Activated B cell treated with CpG ODN at 0.5 μM for 24 hours (primary cell): ENCODE measurements at regions of chr14 and their contacts with region 1.

Region 1: GRCh38 chr14:67571272-67571850 is 28.7 kb downstream of the PIGH start:
- DNase-seq: peak; percentile 55
- ATAC-seq: peak; percentile 86
- H3K4me3 Mint-ChIP-seq: no peak overlapping the region
- H3K27ac Mint-ChIP-seq: no peak overlapping the region
- H3K4me1 Mint-ChIP-seq: peaks cover 3% of the 10 kb centered on the region
- H3K27me3 Mint-ChIP-seq: peaks cover 8% of the 10 kb centered on the region
- CTCF ChIP-seq: no peak

Region 2: GRCh38 chr14:66359500-66359899 is 1211.9 kb before region 1 on chr14:
- CTCF ChIA-PET with region 1: no interaction called
- POLR2A ChIA-PET with region 1: no interaction called
- intact Hi-C with region 1: loop called (anchors 10 kb)
- DNase-seq: no peak
- ATAC-seq: no peak
- H3K4me3 Mint-ChIP-seq: no peak overlapping the region
- H3K27ac Mint-ChIP-seq: no peak overlapping the region
- H3K4me1 Mint-ChIP-seq: no peaks in the 10 kb centered on the region
- H3K27me3 Mint-ChIP-seq: no peaks in the 10 kb centered on the region
- CTCF ChIP-seq: peak; percentile 46

Region 3: GRCh38 chr14:67420102-67420830 is 151.1 kb before region 1 on chr14:
- CTCF ChIA-PET with region 1: interaction called, 339 read pairs
- POLR2A ChIA-PET with region 1: interaction called, 3 read pairs
- intact Hi-C with region 1: no loop called
- DNase-seq: no peak
- ATAC-seq: peak; percentile 30
- H3K4me3 Mint-ChIP-seq: no peak overlapping the region
- H3K27ac Mint-ChIP-seq: no peak overlapping the region
- H3K4me1 Mint-ChIP-seq: peaks cover 13% of the 10 kb centered on the region
- H3K27me3 Mint-ChIP-seq: peaks cover 3% of the 10 kb centered on the region
- CTCF ChIP-seq: no peak

Region 4: GRCh38 chr14:67453575-67454300 is 117.6 kb before region 1 on chr14:
- CTCF ChIA-PET with region 1: interaction called, 14 read pairs
- POLR2A ChIA-PET with region 1: no interaction called
- intact Hi-C with region 1: no loop called
- DNase-seq: no peak
- ATAC-seq: no peak
- H3K4me3 Mint-ChIP-seq: no peak overlapping the region
- H3K27ac Mint-ChIP-seq: no peak overlapping the region
- H3K4me1 Mint-ChIP-seq: no peaks in the 10 kb centered on the region
- H3K27me3 Mint-ChIP-seq: peaks cover 7% of the 10 kb centered on the region
- CTCF ChIP-seq: no peak

Region 5: DNA sequence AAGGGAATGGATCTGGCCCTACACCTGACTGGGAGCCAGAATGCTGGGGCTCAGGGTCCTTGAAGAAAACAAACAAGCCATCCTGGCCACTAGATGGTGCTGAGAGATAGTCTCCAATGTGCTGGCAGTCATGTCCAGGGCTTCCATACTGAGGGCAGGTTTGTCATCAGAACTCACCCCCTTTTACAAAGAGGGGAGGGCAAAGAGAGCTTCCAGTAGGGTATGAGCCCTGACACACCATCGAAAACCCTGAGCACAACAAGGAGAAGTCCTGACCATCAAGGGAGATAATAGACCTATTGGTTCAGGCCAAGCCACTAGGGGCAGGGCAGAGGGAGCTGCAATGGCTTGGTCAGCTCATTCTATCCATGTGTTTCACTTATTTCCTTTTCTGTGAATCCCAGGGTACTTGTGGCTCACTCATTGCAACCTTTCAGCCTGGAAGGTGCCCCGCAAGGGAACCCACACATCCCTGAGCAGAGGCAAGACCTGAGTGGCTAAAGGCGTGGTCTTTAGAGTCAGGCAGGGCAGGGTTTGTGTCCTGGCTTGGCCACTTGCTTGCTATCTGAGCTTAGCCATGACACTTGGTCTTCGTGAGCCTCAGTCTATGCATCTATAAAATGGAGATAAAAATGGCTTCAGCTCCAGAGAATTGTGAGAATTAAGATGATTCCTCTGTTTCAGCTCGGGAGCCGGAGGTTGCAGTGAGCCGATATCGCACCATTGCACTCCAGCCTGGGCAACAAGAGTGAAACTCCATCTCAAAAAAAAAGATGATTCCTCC is 44.5 kb before region 1 on chr14:
- CTCF ChIA-PET with region 1: interaction called, 48 read pairs
- POLR2A ChIA-PET with region 1: no interaction called
- intact Hi-C with region 1: loop called (anchors 1 kb)
- DNase-seq: no peak
- ATAC-seq: peak; percentile 77
- H3K4me3 Mint-ChIP-seq: no peak overlapping the region
- H3K27ac Mint-ChIP-seq: no peak overlapping the region
- H3K4me1 Mint-ChIP-seq: peaks cover 3% of the 10 kb centered on the region
- H3K27me3 Mint-ChIP-seq: peaks cover 51% of the 10 kb centered on the region
- CTCF ChIP-seq: peak; percentile 20

Region 6: GRCh38 chr14:67666750-67667449 is 95.5 kb after region 1 on chr14:
- CTCF ChIA-PET with region 1: interaction called, 11 read pairs
- POLR2A ChIA-PET with region 1: no interaction called
- intact Hi-C with region 1: no loop called
- DNase-seq: no peak
- ATAC-seq: peak; percentile 87
- H3K4me3 Mint-ChIP-seq: peak overlapping the region; percentile 44
- H3K27ac Mint-ChIP-seq: peak overlapping the region; percentile 68
- H3K4me1 Mint-ChIP-seq: peaks cover 58% of the 10 kb centered on the region
- H3K27me3 Mint-ChIP-seq: no peaks in the 10 kb centered on the region
- CTCF ChIP-seq: no peak